WTC11 (cell line): ENCODE measurements at regions of chr3 and their contacts with region 1.

Region 1: DNA sequence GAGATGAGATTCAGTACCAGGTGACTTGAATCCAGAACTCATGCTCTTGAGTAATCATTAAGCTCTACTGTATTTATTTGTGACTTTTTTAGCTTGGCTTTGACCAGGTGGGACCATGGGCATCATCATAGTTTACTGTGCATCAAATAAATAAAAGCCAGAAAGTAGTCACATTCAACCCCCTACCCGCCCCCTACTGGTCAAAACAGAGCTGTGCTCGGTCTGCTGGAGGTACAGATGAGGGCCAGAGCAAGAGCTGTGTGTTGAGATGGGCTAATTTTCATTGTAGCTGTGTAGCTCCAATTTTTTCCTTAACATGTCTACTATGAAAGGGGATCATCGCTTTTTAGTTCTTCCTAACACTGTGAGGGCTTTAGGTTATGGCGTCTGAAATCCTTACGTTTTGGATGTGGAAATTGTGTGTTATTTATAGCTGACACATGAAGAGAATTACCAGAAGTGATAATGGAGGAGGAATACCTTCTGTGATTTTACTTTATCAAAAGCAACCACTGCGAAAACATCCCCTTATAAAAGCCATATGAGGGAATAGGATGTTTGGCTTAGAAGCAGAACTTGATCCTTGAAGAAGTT is 375.1 kb downstream of the PTPRG start:
- DNase-seq: peak; percentile 70
- ATAC-seq: peak; percentile 72
- H3K4me3 Mint-ChIP-seq: no peak overlapping the region
- H3K27ac Mint-ChIP-seq: no peak overlapping the region
- H3K4me1 Mint-ChIP-seq: peaks cover 68% of the 10 kb centered on the region
- H3K27me3 Mint-ChIP-seq: no peaks in the 10 kb centered on the region
- CTCF ChIP-seq: peak; percentile 84

Region 2: DNA sequence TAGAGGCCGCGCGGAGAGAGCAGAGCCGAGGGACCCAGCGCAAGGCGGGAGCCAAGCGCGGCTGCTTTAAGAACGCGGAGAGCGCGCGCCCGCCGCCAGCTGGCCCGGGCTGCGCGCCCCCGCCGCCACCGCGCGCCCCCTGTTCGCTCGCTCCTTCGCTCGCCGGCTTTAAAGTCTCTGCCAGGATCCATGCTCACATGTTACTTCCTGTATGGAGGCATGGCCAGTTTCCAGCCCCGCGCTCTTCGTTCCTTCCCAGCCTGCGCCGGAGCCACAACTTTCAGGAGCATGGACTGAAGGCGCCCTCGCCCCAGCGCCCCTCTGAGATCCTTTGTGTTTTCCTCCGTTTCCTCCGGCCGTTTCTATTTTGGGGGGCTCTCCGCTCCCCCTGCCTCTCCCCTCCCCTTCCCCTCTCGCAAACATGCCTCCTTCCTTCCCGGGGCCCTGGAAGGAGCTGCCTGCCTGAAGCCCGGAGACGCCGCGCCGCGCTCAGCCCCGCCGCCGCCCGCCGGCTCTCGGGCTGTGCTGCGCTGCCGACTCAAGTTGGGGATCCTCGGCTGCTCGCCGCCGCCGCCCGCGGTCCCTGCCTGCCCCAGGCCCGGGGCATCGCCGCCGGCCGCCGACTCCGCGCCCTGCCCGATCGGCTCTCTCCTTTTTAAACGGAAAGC is 374.9 kb before region 1 on chr3 and contains the start of gene PTPRG:
- CTCF ChIA-PET with region 1: interaction called, 10 read pairs
- POLR2A ChIA-PET with region 1: no interaction called
- DNase-seq: peak; percentile 78
- ATAC-seq: peak; percentile 46
- H3K4me3 Mint-ChIP-seq: peak within 1 kb of the TSS; percentile 95
- H3K27ac Mint-ChIP-seq: peak within 1 kb of the TSS; percentile 97
- H3K4me1 Mint-ChIP-seq: peaks cover 34% of the 10 kb centered on the region
- H3K27me3 Mint-ChIP-seq: peaks cover 11% of the 10 kb centered on the region
- CTCF ChIP-seq: no peak
- total RNA-seq, gene PTPRG: 106 to 121 TPM (median 119 TPM) in 3 replicates

Region 3: DNA sequence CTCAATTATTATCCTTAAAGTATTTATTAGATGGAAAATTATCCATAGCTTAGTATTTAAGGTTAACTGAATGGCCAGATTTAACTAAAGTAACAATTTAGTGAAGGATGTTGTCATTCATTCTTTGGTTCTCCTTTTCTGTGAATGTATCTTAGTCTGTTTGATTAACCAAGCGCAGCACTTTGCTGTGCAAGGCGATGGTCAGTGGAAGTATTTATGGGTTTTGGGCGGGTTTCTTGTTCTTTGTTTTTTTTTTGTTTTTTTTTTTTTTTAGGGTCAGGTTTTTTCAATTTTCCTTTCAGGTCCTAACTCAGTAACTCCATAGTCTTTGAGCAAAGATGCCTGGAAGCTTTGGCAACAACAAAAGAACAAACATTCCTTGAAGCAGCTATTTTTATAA is 46.3 kb before region 1 on chr3:
- CTCF ChIA-PET with region 1: interaction called, 10 read pairs
- POLR2A ChIA-PET with region 1: no interaction called
- DNase-seq: no peak
- ATAC-seq: no peak
- H3K4me3 Mint-ChIP-seq: no peak overlapping the region
- H3K27ac Mint-ChIP-seq: peak overlapping the region; percentile 91
- H3K4me1 Mint-ChIP-seq: peaks cover 91% of the 10 kb centered on the region
- H3K27me3 Mint-ChIP-seq: no peaks in the 10 kb centered on the region
- CTCF ChIP-seq: no peak

Region 4: GRCh38 chr3:61919402-61919801 is 17.0 kb before region 1 on chr3:
- CTCF ChIA-PET with region 1: interaction called, 17 read pairs
- POLR2A ChIA-PET with region 1: no interaction called
- DNase-seq: no peak
- ATAC-seq: peak; percentile 57
- H3K4me3 Mint-ChIP-seq: no peak overlapping the region
- H3K27ac Mint-ChIP-seq: no peak overlapping the region
- H3K4me1 Mint-ChIP-seq: peaks cover 82% of the 10 kb centered on the region
- H3K27me3 Mint-ChIP-seq: no peaks in the 10 kb centered on the region
- CTCF ChIP-seq: no peak

Region 5: GRCh38 chr3:61961900-61962299 is 25.5 kb after region 1 on chr3:
- CTCF ChIA-PET with region 1: interaction called, 11 read pairs
- POLR2A ChIA-PET with region 1: no interaction called
- DNase-seq: no peak
- ATAC-seq: no peak
- H3K4me3 Mint-ChIP-seq: no peak overlapping the region
- H3K27ac Mint-ChIP-seq: peak overlapping the region; percentile 17; the same call in 1 of the 2 replicates
- H3K4me1 Mint-ChIP-seq: peaks cover 67% of the 10 kb centered on the region
- H3K27me3 Mint-ChIP-seq: no peaks in the 10 kb centered on the region
- CTCF ChIP-seq: no peak